Naive thymus-derived CD4-positive, alpha-beta T cell (primary cell): ENCODE measurements at regions of chr22 and their contacts with region 1.

Region 1: DNA sequence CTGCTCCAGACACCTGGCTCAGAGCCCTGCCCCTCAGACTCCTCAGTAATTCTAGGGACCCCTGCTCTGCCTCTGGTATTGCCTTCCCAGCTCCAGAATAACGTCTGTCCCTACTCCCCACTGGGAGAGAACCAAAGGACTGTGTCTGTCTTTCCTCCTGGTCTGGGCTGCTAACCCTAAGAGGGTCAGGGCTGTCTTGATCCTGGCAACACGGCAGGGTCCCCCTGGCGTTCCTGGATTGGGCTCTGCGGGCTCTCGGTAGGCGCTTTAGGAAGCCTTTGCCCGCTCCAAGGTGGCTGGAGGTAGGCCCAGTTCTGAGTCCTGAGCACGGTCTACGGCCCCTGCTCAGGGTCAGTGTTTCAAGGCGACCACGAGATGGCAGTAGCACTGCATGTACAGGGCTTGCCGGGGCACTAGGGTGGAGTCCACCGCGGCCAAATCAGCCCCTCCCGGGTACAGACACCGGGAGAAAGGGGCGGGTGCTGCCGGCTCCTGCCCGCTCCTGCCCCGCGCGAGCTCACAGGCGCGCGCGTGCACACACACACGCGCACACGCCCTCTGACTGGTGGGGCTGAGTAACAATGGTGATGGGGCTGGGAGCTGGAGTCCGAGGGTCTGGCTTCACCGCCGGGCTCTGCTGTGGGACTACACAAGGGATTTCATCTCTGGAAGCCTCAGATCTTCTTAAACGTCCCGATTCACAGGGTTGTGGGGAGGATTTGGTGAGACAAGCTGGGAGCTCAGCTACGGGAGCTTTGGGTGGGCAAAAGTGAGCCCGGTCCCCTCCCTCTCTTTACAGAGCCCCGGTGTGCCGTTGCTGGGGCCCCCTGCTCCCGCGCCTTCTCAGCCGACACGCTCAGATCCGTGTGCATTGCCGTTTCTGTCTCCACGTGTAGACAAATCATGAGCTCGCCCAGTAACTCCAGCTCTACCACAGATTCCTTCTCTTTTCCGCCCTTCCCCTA is 30.1 kb upstream of the HMOX1 start:
- DNase-seq: peak; percentile 52 to 85 (median 75)
- ATAC-seq: peak; percentile 88
- H3K4me3 ChIP-seq: peak overlapping the region; percentile 71
- H3K4me3 Mint-ChIP-seq: peak overlapping the region; percentile 39 to 88 (median 82)
- H3K27ac ChIP-seq: no peak overlapping the region
- H3K27ac Mint-ChIP-seq: peak overlapping the region in 6 of 9 donors; percentile 12 to 78 (median 37)
- H3K4me1 ChIP-seq: peaks cover 11 to 16% of the 10 kb centered on the region in 2 donors
- H3K4me1 Mint-ChIP-seq: peaks cover 8 to 29% (median 26%) of the 10 kb centered on the region in 7 donors
- H3K27me3 ChIP-seq: no peaks in the 10 kb centered on the region
- H3K27me3 Mint-ChIP-seq: peaks cover 4 to 8% (median 5%) of the 10 kb centered on the region in 5 donors

Region 2: DNA sequence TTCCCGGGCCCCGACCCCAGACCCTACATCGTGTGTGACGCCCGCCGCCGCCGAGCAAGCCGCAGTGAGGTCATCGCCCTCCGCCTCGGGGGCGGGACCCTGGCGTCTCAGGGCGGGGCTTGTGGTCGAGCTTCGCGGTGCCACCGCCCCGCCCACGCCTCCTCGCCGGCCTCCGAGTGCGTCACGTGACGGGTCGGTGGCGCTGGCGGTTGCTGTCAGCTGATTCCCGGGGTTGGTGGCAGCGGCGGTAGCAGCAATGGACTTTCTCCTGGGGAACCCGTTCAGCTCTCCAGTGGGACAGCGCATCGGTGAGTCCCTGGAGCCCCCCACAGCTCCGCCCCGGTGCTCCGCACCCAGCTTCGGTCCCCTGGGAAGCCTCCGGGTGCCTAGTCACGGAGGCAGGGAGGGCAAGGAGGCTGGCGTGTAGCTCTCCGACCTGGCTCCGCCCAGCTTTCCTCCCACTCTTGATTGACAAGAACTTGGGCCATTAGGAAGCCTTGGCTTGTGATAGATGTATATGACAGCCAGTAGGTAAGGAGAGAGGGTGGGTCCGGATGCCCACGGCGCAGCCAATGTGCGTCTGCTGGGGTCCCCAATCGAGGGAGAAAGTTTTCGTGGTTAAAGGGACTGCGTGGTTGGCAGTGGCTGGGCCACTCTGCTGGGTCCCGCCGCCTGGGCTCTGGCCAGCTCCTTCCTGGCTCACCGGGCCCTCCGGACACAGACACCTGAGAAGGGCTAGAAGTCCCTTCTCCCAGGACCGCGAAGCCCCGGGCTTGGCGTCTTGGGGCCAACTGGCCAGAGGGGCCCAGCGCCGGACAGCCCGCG is 50.9 kb before region 1 on chr22 and contains the start of gene TOM1:
- CTCF ChIA-PET with region 1: interaction called, 3 read pairs
- POLR2A ChIA-PET with region 1: interaction called, 4 read pairs
- intact Hi-C with region 1: loop called in 1 of 2 experiments (anchors 10 kb)
- DNase-seq: peak; percentile 96 to 100 (median 98)
- ATAC-seq: peak; percentile 91
- H3K4me3 ChIP-seq: peak within 1 kb of the TSS; percentile 77
- H3K4me3 Mint-ChIP-seq: peak within 1 kb of the TSS; percentile 89 to 99 (median 94)
- H3K27ac ChIP-seq: peak within 1 kb of the TSS; percentile 95
- H3K27ac Mint-ChIP-seq: peak within 1 kb of the TSS; percentile 94 to 100 (median 98)
- H3K4me1 ChIP-seq: peaks cover 10% of the 10 kb centered on the region in 2 donors
- H3K4me1 Mint-ChIP-seq: peaks cover 13 to 50% (median 38%) of the 10 kb centered on the region in 7 donors
- H3K27me3 ChIP-seq: no peaks in the 10 kb centered on the region
- H3K27me3 Mint-ChIP-seq: no peaks in the 10 kb centered on the region
- total RNA-seq, gene TOM1: 36.5 to 225 (median 62.1) TPM

Region 3: GRCh38 chr22:35430897-35431322 is 80.1 kb after region 1 on chr22:
- CTCF ChIA-PET with region 1: interaction called, 3 read pairs
- POLR2A ChIA-PET with region 1: no interaction called
- intact Hi-C with region 1: loop called in 1 of 2 experiments (anchors 1 kb)
- DNase-seq: peak; percentile 30 to 74 (median 59)
- ATAC-seq: peak; percentile 83
- H3K4me3 ChIP-seq: no peak overlapping the region
- H3K4me3 Mint-ChIP-seq: no peak overlapping the region
- H3K27ac ChIP-seq: no peak overlapping the region
- H3K27ac Mint-ChIP-seq: no peak overlapping the region
- H3K4me1 ChIP-seq: no peaks in the 10 kb centered on the region
- H3K4me1 Mint-ChIP-seq: peaks cover 0 to 3% (median 0%) of the 10 kb centered on the region in 7 donors
- H3K27me3 ChIP-seq: no peaks in the 10 kb centered on the region
- H3K27me3 Mint-ChIP-seq: no peaks in the 10 kb centered on the region

Region 4: DNA sequence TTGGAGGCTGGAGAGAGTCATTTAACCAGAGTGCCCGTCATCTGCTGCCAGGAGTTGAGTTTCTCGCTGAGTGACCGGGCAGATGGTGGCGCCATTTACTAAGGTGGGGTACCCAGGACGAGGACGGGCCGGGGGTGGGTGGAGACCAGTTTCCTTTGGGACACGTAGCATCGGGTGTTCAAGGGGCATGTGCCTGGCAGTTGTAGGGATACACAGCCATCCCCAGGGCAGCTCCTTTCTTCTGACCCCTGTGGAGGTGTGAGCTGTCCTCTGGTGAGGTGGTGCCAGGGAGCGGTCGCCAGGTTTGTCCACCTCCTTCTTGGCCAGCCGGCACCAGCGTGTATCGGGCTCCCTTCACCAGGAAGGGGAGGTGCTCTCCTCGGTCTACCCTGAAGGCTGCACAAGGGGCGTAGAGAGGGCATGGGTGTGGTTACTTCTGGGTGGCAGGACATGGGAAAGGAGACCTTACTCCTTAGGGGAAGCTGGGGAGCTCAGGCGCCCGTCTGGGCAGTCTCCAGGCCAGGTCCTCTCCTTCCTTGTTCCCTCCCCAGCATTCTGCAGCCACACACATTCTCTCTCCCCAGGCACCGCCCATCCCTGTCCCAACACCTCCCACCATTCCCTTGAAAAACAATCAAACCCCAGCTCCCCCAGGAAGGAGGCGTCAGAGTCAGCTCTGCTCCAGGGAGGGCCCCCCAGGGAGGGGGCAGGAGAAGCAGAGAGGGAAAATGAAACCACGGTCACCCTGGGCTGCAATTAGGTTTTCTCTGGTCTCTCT is 276.6 kb after region 1 on chr22:
- CTCF ChIA-PET with region 1: interaction called, 5 read pairs
- POLR2A ChIA-PET with region 1: no interaction called
- intact Hi-C with region 1: loop called (anchors 1 kb)
- DNase-seq: peak in 5 of 9 donors; percentile 14 to 49 (median 34)
- ATAC-seq: peak; percentile 42
- H3K4me3 ChIP-seq: peak overlapping the region; percentile 55
- H3K4me3 Mint-ChIP-seq: peak overlapping the region; percentile 53 to 86 (median 73)
- H3K27ac ChIP-seq: no peak overlapping the region
- H3K27ac Mint-ChIP-seq: peak overlapping the region in 7 of 9 donors; percentile 28 to 93 (median 64)
- H3K4me1 ChIP-seq: peaks cover 0 to 10% of the 10 kb centered on the region in 2 donors
- H3K4me1 Mint-ChIP-seq: peaks cover 8 to 30% (median 28%) of the 10 kb centered on the region in 7 donors
- H3K27me3 ChIP-seq: no peaks in the 10 kb centered on the region
- H3K27me3 Mint-ChIP-seq: peaks cover 0 to 14% (median 8%) of the 10 kb centered on the region in 5 donors

Region 5: DNA sequence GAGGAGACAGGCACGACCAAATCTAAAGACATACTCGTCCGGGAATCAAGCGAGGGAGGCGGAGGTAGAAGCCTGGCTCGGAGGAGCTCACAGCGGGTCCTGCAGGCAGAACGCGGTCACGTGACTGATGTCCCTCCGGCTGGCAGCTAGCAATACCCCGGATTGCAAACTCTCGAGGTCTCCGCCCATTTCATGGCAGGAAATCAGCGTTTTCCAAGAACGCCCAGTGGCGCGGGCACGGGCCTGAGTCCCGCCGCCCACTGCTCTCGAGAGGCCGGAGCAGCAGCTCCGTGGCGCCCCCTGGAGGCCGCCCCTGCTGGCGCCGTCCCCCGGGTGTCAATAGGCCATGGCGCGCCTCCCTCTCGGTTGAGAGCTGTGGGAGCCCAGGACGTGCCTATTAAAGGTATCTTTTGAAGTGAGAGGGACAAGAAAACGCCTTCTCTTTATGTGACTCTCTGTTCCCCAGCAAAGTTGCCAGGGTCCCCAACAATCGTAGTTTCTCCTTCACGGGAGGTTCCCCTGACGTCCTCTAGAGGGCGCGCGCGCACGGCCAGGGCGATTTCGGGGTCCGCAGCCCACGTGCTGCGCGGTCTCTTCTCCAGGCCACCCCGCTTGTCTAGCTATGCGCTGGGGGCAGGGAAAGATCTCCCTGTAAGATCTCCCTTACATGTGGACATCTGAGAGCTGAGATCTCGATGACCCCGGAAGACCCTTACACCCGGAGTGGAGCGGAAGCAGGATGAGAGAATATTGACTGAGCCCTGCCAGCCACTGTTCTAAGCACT is 715.1 kb after region 1 on chr22:
- CTCF ChIA-PET with region 1: no interaction called
- POLR2A ChIA-PET with region 1: no interaction called
- intact Hi-C with region 1: loop called in 1 of 2 experiments (anchors 5 kb)
- DNase-seq: peak; percentile 35 to 80 (median 56)
- ATAC-seq: peak; percentile 88
- H3K4me3 ChIP-seq: peak overlapping the region; percentile 72
- H3K4me3 Mint-ChIP-seq: peak overlapping the region; percentile 80 to 92 (median 87)
- H3K27ac ChIP-seq: peak overlapping the region; percentile 21
- H3K27ac Mint-ChIP-seq: peak overlapping the region in 7 of 9 donors; percentile 14 to 89 (median 58)
- H3K4me1 ChIP-seq: peaks cover 6 to 8% of the 10 kb centered on the region in 2 donors
- H3K4me1 Mint-ChIP-seq: peaks cover 4 to 10% (median 8%) of the 10 kb centered on the region in 7 donors
- H3K27me3 ChIP-seq: no peaks in the 10 kb centered on the region
- H3K27me3 Mint-ChIP-seq: peaks cover 0 to 11% (median 0%) of the 10 kb centered on the region in 5 donors

Region 6: GRCh38 chr22:36180038-36180880 is 829.4 kb after region 1 on chr22:
- CTCF ChIA-PET with region 1: interaction called, 4 read pairs
- POLR2A ChIA-PET with region 1: no interaction called
- intact Hi-C with region 1: loop called in 1 of 2 experiments (anchors 1 kb)
- DNase-seq: peak; percentile 63 to 85 (median 76)
- ATAC-seq: peak; percentile 99
- H3K4me3 ChIP-seq: no peak overlapping the region
- H3K4me3 Mint-ChIP-seq: no peak overlapping the region
- H3K27ac ChIP-seq: no peak overlapping the region
- H3K27ac Mint-ChIP-seq: peak overlapping the region in 1 of 9 donors; percentile 45
- H3K4me1 ChIP-seq: peaks cover 0 to 2% of the 10 kb centered on the region in 2 donors
- H3K4me1 Mint-ChIP-seq: peaks cover 0 to 4% (median 3%) of the 10 kb centered on the region in 7 donors
- H3K27me3 ChIP-seq: no peaks in the 10 kb centered on the region
- H3K27me3 Mint-ChIP-seq: peaks cover 0 to 20% (median 0%) of the 10 kb centered on the region in 5 donors